ENCODE measurements at regions of chr10 and their contacts with region 1.

Region 1: DNA sequence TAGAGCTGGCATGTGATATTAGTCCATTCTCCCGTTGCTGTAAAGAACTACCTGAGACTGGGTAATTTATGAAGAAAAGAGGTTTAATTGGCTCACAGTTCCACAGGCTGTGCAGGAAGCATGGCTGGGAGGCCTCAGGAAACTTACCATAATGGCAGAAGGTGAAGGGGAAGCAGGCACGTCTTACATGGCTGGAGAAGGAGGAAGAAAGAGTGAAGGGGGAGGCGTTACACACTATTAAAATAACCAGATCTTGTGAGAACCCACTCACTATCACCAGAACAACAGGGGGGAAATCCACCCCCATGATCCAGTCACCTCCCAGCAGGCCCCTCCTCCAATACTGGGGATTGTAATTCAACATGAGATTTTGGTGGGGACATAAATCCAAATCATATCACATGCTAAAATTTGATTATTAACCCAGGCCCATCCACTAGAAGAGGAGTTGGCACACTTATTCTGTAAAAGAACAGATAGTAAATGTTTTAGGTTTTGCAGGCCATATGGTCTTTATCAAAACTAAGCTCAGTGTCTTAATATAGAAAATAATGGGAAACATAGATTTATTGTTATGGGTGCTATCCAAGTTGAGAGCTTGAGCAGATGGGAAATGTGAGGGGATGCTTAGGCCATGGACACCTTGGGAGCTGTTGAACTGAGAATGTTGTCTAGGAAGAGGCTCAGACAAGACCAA is 18.6 kb upstream of the HK1 start:
- DNase-seq: no peak

Region 2: DNA sequence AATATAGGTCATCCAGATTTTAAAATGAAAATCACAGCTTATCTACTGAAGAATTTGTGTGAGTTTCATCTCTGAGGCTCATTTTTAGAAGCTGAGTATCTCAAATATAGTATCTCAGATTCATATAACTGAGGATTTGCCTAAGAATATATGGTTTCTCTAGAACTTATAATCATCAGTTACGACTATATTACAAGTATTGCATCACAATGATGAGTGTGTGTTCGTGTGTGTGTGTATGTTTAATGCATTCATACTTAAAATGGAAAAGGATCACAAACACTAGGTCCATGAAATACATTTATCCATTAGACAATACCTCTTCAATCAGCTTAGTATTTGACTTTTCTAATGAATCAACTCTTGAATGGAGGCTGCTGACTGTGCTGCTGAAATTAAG is 874.0 kb before region 1 on chr10:
- intact Hi-C with region 1: no loop called
- DNase-seq: no peak

Region 3: GRCh38 chr10:69367469-69367868 is 107.8 kb after region 1 on chr10:
- intact Hi-C with region 1: loop called in 1 of 2 experiments (anchors 5 kb)
- DNase-seq: no peak

Measured in posterior vena cava (tissue), 2 donors.